MCF 10A (cell line): ENCODE measurements at regions of chr17 and their contacts with region 1.

Region 1: DNA sequence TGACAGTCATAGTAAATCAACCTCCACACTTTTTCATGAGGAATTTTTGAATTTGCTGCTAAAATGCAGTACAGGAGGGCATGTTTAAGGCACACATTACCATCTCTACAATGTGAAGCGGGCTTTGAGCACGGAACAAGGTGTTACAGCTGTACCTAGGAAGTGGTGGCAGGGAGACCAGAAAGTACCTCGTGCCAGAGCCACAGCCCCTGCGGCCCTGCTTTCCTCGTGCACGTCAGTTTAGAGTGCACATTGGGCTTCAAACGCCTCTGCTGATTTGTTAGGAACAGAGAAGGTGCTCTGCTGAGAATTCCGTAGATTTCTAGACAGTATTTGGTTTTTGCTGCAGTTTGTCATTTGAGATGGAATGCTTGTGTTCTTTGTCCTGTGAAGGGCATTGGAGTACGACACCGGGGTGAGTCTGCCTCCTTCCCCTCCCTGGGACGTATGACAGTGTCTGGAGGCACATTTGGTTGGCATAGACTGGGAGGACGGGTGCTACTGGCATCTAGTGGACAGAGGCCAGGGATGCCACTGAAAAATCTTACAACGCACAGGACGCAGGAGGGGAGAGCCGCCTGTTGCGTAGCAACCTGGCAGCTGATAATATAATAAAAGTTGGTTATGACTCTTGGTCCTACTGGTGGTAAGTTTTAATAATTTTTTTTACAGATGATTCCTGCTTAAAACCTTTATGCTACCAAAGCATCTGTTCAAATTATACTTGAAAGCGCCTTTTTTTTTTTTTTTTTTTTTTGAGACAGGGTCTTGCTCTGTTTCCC is 9.1 kb downstream of the FOXK2 start:
- DNase-seq: peak; percentile 95
- H3K4me3 Mint-ChIP-seq: peak overlapping the region; percentile 66
- H3K27ac Mint-ChIP-seq: peak overlapping the region; percentile 88
- H3K4me1 Mint-ChIP-seq: peaks cover 50% of the 10 kb centered on the region
- H3K27me3 Mint-ChIP-seq: no peaks in the 10 kb centered on the region
- CTCF ChIP-seq: peak; percentile 78

Region 2: DNA sequence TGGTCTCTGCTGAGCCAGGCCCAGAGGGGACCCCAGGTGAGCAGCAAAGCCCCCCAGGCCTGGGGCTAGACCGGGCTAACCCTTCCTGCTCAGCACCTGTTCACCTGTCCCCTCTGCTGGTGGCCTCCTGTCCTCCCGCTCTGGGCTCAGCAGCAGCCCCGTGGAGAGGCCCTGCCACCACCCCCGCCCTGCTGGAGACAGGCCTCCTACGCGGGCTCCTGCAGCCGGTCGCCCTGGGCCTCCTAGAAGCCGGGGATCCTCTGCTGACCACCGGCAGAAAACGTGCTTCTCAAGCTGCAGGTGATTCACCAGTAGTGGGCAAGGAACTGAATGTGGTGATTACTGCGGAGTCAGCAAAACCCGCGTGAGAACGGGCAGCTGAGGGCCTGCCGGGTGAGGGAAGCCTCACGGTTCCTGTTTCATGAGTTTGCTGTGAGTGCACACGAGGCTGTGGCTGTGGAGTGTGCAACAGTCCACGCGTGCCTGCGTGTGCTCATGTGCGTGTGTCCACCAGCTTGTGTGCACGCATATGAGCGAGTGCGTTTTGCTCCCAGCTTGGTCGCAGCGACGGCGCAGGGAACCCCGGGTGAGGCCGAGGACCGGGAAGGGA is 195.9 kb before region 1 on chr17:
- CTCF ChIA-PET with region 1: interaction called, 3 read pairs
- POLR2A ChIA-PET with region 1: interaction called, 16 read pairs
- intact Hi-C with region 1: no loop called
- DNase-seq: peak; percentile 68
- H3K4me3 Mint-ChIP-seq: peak overlapping the region; percentile 85
- H3K27ac Mint-ChIP-seq: peak overlapping the region; percentile 85
- H3K4me1 Mint-ChIP-seq: peaks cover 16% of the 10 kb centered on the region
- H3K27me3 Mint-ChIP-seq: no peaks in the 10 kb centered on the region
- CTCF ChIP-seq: no peak

Region 3: DNA sequence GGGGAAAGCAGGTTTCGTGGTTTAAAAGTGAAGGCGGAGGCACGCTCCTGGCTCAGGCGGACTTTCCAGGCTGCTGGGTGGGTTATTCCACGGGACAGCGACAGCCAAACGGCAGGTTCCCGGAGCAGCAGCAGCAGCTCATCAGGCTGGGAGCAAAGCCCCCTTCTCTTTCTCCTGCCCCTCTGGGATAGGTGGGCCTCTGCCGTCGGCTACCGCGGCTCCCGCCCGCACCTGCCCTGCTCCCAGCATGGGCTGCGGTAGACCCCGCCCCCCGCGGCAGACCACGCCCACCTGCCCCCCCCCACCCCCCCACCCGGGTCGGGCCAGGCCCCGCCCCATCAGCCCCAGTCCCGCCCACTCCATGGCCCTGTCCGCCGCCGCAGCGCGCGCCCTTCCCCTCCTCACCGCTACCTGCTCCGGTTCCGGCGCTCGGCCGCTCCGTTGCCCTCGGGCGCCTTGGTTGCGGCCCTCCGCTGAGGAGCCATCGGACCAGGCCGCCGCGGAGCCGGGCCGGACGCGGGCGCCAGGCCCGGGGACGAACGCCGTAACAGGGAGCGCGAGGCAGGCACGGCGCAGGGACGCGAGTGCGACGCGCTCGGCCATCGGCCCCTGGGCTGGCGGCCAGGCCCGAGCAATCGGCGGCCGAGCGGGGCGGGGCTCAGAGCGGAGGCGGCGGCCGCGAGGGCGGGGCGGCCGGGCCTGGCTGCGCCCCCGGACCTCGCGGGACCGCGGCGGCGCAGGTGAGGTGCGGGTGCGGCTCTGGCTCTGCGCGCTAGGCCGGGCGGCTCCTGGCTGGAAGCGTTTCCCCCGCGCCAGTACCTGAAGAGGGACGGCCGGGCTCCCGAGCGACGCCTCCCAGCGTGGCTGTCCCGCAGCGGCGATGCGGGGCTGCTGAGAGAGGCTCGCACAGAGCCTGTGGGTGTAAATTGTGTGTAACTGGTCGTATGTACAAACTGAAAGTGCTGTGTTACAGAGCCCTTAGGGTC is 110.4 kb before region 1 on chr17 and contains the starts of genes HEXD and OGFOD3:
- CTCF ChIA-PET with region 1: interaction called, 4 read pairs
- POLR2A ChIA-PET with region 1: interaction called, 12 read pairs
- intact Hi-C with region 1: loop called (anchors 10 kb)
- DNase-seq: peak; percentile 78
- H3K4me3 Mint-ChIP-seq: peak within 1 kb of the TSS; percentile 71
- H3K27ac Mint-ChIP-seq: no peak within 1 kb of the TSS
- H3K4me1 Mint-ChIP-seq: no peaks in the 10 kb centered on the region
- H3K27me3 Mint-ChIP-seq: no peaks in the 10 kb centered on the region
- CTCF ChIP-seq: no peak
- total RNA-seq, gene HEXD: 14.8 and 16.2 TPM in 2 replicates
- total RNA-seq, gene OGFOD3: 16.5 and 21.1 TPM in 2 replicates

Region 4: GRCh38 chr17:82457997-82458864 is 70.4 kb before region 1 on chr17 and contains the start of gene NARF:
- CTCF ChIA-PET with region 1: interaction called, 4 read pairs
- POLR2A ChIA-PET with region 1: interaction called, 11 read pairs
- intact Hi-C with region 1: loop called (anchors 5 kb)
- DNase-seq: peak; percentile 99
- H3K4me3 Mint-ChIP-seq: peak within 1 kb of the TSS; percentile 83
- H3K27ac Mint-ChIP-seq: peak within 1 kb of the TSS; percentile 90
- H3K4me1 Mint-ChIP-seq: peaks cover 12% of the 10 kb centered on the region
- H3K27me3 Mint-ChIP-seq: no peaks in the 10 kb centered on the region
- CTCF ChIP-seq: no peak
- total RNA-seq, gene NARF: 20.6 TPM in 2 replicates

Region 5: GRCh38 chr17:82545071-82545462 is 16.4 kb after region 1 on chr17:
- CTCF ChIA-PET with region 1: interaction called, 9 read pairs
- POLR2A ChIA-PET with region 1: interaction called, 15 read pairs
- intact Hi-C with region 1: no loop called
- DNase-seq: no peak
- H3K4me3 Mint-ChIP-seq: no peak overlapping the region
- H3K27ac Mint-ChIP-seq: peak overlapping the region; percentile 48
- H3K4me1 Mint-ChIP-seq: peaks cover 25% of the 10 kb centered on the region
- H3K27me3 Mint-ChIP-seq: no peaks in the 10 kb centered on the region
- CTCF ChIP-seq: no peak

Region 6: GRCh38 chr17:82729479-82730260 is 201.0 kb after region 1 on chr17:
- CTCF ChIA-PET with region 1: no interaction called
- POLR2A ChIA-PET with region 1: no interaction called
- intact Hi-C with region 1: no loop called
- DNase-seq: no peak
- H3K4me3 Mint-ChIP-seq: no peak overlapping the region
- H3K27ac Mint-ChIP-seq: no peak overlapping the region
- H3K4me1 Mint-ChIP-seq: no peaks in the 10 kb centered on the region
- H3K27me3 Mint-ChIP-seq: no peaks in the 10 kb centered on the region
- CTCF ChIP-seq: no peak